ENCODE measurements at regions of chr16 and their contacts with region 1.

Region 1: DNA sequence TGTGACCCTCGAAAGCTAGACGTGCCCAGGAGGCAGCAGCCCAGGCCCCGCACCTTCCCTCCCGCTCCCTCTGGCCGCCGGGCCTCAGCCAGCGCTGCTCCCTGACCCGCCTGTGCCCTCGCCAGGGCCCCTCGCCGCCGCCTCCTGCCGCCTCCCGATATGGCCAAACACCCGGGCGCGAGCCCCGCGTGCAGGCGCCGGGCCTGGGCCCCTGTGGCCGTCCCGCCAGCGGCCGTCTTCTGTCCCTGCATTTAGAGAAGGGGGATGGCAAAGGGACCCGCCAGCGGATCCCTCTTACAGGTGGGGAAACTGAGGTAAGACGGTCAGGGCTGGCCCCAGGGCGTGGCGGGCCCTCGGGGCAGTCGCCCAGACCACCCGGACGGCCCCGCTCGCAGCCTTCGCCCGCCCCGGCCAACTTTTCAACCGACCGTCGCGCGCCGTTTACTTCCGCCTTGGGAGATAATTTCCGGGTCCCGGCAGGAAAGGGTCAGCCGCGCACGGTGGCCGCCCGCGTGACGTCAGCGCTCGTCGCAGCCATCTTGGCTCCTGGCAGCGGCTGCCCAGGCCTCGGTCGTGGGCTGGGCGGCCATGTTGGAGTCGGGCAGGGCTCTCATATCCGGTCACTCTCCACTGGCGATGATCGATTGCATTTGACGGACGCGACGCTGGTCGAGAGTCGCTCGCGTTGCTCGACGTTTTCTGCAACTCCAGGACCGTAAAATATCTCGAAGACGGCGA is 7.0 kb upstream of the GNG13 start:
- DNase-seq: peak; percentile 96
- H3K4me3 ChIP-seq: peak overlapping the region; percentile 62 to 98 (median 86)
- H3K27ac ChIP-seq: peak overlapping the region; percentile 91 to 94 (median 92)
- H3K4me1 ChIP-seq: peaks cover 0 to 31% (median 20%) of the 10 kb centered on the region in 4 donors
- H3K27me3 ChIP-seq: peaks cover 0 to 24% (median 6%) of the 10 kb centered on the region in 3 donors
- CTCF ChIP-seq: no peak
- EP300 ChIP-seq: no peak
- POLR2A ChIP-seq: peak in 1 of 2 donors; percentile 50

Region 2: GRCh38 chr16:788394-789126 is 19.0 kb before region 1 on chr16 and contains the start of gene CHTF18:
- intact Hi-C with region 1: loop called (anchors 1 kb)
- DNase-seq: peak; percentile 94
- H3K4me3 ChIP-seq: peak within 1 kb of the TSS; percentile 84 to 100 (median 94)
- H3K27ac ChIP-seq: peak within 1 kb of the TSS; percentile 62 to 83 (median 76)
- H3K4me1 ChIP-seq: peaks cover 0 to 25% (median 24%) of the 10 kb centered on the region in 4 donors
- H3K27me3 ChIP-seq: no peaks in the 10 kb centered on the region
- CTCF ChIP-seq: no peak
- EP300 ChIP-seq: no peak
- POLR2A ChIP-seq: no peak
- total RNA-seq, gene CHTF18: 2.8 to 7.7 (median 5.1) TPM

Region 3: GRCh38 chr16:969508-970378 is 162.2 kb after region 1 on chr16:
- intact Hi-C with region 1: loop called (anchors 5 kb)
- DNase-seq: no peak
- H3K4me3 ChIP-seq: peak overlapping the region; percentile 63 to 97 (median 90)
- H3K27ac ChIP-seq: peak overlapping the region; percentile 72 to 85 (median 82)
- H3K4me1 ChIP-seq: peaks cover 0 to 32% (median 27%) of the 10 kb centered on the region in 4 donors
- H3K27me3 ChIP-seq: no peaks in the 10 kb centered on the region
- CTCF ChIP-seq: no peak
- EP300 ChIP-seq: no peak
- POLR2A ChIP-seq: no peak

Measured in sigmoid colon (tissue), 7 donors.